ENCODE measurements at regions of chr1 and their contacts with region 1.

Region 1: DNA sequence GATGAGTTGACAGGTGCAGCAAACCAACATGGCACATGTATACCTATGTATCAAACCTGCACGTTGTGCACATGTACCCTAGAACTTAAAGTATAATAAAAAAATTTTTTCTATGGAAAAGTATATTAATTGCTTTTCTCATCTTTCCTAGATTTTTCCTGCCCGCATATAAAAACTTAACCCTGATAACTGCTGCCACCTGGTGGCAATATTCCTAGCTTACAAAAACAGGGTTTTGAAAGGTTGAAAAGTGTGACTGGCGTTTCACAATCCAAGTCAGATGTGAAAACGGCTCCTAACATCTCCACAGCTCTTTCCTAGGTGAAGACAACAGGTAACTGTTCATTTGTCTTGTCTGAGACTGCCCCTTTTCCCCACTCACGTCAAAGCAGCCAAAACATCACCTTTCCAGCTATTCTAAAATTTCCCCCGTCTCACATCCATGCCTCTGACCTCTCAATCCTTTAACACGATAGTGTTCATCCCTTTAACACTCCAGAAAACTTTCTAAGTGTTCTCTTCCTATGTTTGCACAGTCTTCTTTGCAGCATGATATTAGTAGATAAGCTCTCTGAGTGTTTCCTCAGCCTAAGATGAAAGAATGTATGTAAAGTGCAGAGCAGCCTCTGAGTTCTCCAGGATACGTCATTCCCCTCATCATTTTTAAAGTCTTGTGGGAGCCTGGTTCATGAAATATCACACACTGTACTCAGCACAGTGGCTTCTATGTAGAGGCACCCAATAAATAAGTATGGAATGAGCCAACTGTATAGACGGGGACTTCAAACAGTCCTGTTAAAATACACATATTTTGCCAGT is 27.5 kb downstream of the OVGP1 start:
- DNase-seq: peak in 1 of 2 experiments; percentile 71
- H3K4me3 ChIP-seq: no peak overlapping the region
- H3K27ac ChIP-seq: no peak overlapping the region
- H3K4me1 ChIP-seq: no peaks in the 10 kb centered on the region
- H3K27me3 ChIP-seq: no peaks in the 10 kb centered on the region
- CTCF ChIP-seq: peak in 2 of 3 experiments; percentile 54 to 62; a peak in 3 of 4 replicates
- EP300 ChIP-seq: no peak
- POLR2A ChIP-seq: no peak
- RAD21 ChIP-seq: peak; percentile 75 to 81

Region 2: DNA sequence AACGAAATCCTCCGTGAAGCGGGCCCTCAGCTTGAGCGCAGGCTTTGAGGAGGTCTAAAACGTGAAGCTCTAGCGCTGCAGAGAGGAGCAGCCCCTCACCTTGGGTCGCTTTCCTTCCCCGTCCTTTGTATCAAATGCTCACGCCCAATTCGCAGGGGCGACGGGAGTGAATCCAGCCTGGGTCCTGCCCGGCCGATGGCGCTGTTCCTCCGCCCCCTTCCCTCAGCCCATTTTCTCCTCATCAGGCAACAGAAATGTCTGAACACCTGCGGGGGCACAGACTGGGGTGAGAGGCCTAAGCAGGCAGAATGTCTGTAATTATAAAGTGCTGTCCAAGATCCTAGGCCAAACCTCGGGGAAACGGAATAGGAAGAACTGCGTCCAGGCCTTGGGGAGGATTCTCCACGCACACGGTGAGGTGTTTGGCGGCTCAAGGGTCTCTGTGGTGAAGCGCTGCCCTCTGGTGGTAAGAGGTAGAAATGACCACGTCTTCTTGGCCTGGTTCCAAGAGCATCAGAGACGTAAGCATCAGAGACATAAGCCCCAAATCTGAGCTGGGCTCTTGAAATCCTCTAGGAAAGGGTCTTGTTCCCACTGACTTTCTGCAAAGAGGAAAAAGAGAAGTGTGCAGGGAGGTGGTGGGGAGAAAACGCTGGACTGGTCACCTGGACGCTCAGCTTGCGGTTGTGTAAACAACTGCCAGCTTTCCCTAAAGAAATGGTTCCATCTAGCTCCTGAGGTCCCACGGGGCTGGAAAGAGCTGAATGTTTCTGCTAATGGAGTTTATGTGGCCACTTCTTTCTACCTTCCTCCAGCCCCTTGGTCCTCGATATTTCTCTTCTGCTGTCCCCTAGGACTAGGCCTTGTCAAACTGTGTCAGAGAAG is 619.2 kb before region 1 on chr1:
- CTCF ChIA-PET with region 1: interaction called, 10 read pairs
- POLR2A ChIA-PET with region 1: no interaction called
- DNase-seq: peak; percentile 43 to 83
- H3K4me3 ChIP-seq: peak overlapping the region; percentile 11 to 61 (median 32); a peak in 7 of 8 replicates
- H3K27ac ChIP-seq: no peak overlapping the region
- H3K4me1 ChIP-seq: peaks cover 0 to 2% (median 0%) of the 10 kb centered on the region in 4 experiments; a peak in 1 of 7 replicates
- H3K27me3 ChIP-seq: peaks cover 0 to 5% (median 1%) of the 10 kb centered on the region in 4 experiments; a peak in 4 of 7 replicates
- CTCF ChIP-seq: peak; percentile 81 to 91 (median 88)
- EP300 ChIP-seq: no peak
- POLR2A ChIP-seq: no peak
- RAD21 ChIP-seq: peak; percentile 90 to 92

Region 3: DNA sequence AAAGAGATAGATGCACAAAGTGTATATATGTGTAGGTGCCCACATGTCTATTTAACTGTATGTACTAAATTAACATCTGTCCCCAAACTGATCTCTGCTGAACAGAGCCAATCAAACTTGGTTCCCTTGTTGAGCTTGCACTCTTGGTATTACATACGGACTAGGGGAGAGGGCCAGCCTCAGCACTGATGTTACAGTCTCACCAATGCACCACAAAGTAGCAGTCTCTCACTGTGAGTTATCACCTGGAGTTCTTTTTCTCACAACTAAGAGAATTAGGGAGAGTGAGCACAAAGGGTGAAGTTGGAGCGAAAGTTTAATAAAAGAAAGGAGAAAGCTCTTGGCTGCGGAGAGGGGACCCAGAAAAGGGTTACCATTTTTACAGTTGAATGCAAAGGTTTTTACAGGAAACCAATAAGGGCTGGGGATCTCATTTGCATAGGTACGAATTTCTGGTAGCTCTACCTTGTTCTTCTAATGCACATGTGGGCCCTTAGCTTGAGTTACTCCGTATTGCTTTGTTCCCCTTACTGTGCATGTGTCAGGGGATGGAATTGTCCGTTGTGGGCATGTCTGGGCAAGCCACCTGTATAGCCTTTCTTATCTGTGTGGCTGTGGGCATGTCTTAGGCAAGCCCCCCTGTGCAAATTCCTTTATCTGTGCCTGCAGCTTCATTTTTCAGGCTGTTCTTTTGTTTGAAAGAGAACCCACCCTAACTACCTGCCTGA is 185.8 kb before region 1 on chr1:
- CTCF ChIA-PET with region 1: interaction called, 33 read pairs
- POLR2A ChIA-PET with region 1: no interaction called
- DNase-seq: no peak
- H3K4me3 ChIP-seq: no peak overlapping the region
- H3K27ac ChIP-seq: no peak overlapping the region; the same call in 1 of the 2 replicates
- H3K4me1 ChIP-seq: peaks cover 0 to 7% (median 4%) of the 10 kb centered on the region in 4 experiments; a peak in 3 of 7 replicates
- H3K27me3 ChIP-seq: no peaks in the 10 kb centered on the region; a peak in 1 of 7 replicates
- CTCF ChIP-seq: no peak
- EP300 ChIP-seq: no peak
- POLR2A ChIP-seq: no peak
- RAD21 ChIP-seq: no peak

Region 4: DNA sequence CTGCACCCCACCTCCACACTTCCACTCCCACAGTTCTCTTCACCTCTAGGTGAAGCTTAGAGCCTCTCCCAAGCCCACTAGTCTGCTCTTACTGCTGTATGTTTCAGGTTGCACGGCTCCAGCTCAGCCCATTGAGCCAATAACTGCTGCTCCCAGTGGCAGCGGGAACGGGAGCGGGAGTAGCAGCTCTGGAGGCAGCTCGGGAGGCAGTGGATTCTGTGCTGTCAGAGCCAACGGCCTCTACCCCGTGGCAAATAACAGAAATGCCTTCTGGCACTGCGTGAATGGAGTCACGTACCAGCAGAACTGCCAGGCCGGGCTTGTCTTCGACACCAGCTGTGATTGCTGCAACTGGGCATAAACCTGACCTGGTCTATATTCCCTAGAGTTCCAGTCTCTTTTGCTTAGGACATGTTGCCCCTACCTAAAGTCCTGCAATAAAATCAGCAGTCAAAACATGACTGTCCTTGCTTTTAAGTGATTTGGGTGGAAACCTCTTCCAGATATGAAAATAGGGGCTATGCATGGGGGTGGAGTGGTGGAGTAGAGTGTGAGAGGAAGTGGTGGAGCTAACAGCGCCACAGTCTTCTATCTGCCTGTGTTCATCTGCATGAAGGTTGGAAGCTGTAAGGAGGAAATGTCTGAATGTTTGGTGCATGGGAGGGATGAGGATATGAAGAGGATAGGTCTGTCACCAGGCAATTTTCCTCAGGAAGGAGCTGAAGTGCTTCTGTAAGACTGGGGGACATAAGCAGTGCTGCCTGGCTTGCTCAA is 79.7 kb before region 1 on chr1:
- CTCF ChIA-PET with region 1: interaction called, 11 read pairs
- POLR2A ChIA-PET with region 1: no interaction called
- DNase-seq: no peak
- H3K4me3 ChIP-seq: no peak overlapping the region
- H3K27ac ChIP-seq: no peak overlapping the region
- H3K4me1 ChIP-seq: no peaks in the 10 kb centered on the region
- H3K27me3 ChIP-seq: no peaks in the 10 kb centered on the region
- CTCF ChIP-seq: no peak
- EP300 ChIP-seq: no peak
- POLR2A ChIP-seq: no peak
- RAD21 ChIP-seq: no peak

Region 5: DNA sequence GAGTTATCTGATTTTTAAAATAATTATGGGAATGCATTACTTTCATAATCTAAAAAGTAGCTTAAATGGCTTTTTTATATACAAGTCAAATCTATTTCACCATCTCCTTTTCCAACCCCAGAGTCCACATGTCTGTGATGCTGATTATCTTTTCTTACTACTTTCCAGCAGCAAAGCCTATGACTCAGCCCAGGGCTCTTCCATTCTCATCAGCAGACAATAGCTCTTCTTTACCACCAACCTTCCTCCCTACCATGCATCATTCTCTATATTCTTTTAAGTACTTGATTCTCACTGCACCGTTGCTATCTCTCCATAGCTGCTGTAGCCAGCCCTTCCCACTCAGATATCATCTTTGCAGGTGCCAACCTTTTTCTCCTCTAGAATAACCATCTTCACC is 33.7 kb before region 1 on chr1:
- CTCF ChIA-PET with region 1: interaction called, 17 read pairs
- POLR2A ChIA-PET with region 1: no interaction called
- DNase-seq: no peak
- H3K4me3 ChIP-seq: no peak overlapping the region
- H3K27ac ChIP-seq: no peak overlapping the region
- H3K4me1 ChIP-seq: peaks cover 2 to 18% (median 5%) of the 10 kb centered on the region in 4 experiments; a peak in 3 of 7 replicates
- H3K27me3 ChIP-seq: no peaks in the 10 kb centered on the region
- CTCF ChIP-seq: no peak
- EP300 ChIP-seq: no peak
- POLR2A ChIP-seq: no peak
- RAD21 ChIP-seq: no peak

Region 6: DNA sequence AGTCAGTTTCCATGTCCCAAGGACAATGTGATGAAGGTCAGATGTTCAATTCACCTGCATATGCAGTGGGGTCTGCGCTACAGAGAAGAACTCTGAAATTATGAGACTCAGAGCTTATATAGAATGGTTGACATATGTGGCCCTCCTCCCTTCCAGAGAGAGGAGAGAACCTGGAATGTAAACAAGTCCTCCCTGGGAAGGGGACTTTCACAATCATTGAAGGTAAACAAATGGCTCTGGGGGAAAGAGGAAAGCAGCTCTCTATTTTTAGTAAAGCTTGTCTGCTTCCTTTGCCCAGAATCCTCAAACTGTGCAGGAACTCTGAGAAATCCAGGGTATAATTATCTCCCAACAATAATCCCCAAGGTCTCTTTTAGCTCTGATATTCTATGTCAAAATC is 17.8 kb after region 1 on chr1:
- CTCF ChIA-PET with region 1: interaction called, 15 read pairs
- POLR2A ChIA-PET with region 1: interaction called, 3 read pairs
- DNase-seq: no peak
- H3K4me3 ChIP-seq: no peak overlapping the region
- H3K27ac ChIP-seq: no peak overlapping the region
- H3K4me1 ChIP-seq: no peaks in the 10 kb centered on the region
- H3K27me3 ChIP-seq: no peaks in the 10 kb centered on the region; a peak in 1 of 7 replicates
- CTCF ChIP-seq: no peak
- EP300 ChIP-seq: no peak
- POLR2A ChIP-seq: no peak
- RAD21 ChIP-seq: no peak

Measured in H1 (cell line).